ENCODE measurements at regions of chr19 and their contacts with region 1.

Region 1: GRCh38 chr19:57664269-57665127 is 4.2 kb upstream of the ZSCAN4 start:
- DNase-seq: peak; percentile 46
- H3K4me3 ChIP-seq: peak overlapping the region; percentile 44 to 48 (median 46)
- H3K27ac ChIP-seq: no peak overlapping the region
- H3K4me1 ChIP-seq: peaks cover 4% of the 10 kb centered on the region
- H3K27me3 ChIP-seq: peaks cover 0 to 2% of the 10 kb centered on the region in 2 experiments
- CTCF ChIP-seq: no peak
- POLR2A ChIP-seq: no peak

Region 2: GRCh38 chr19:57682226-57682766 is 17.8 kb after region 1 on chr19:
- CTCF ChIA-PET with region 1: interaction called, 16 read pairs
- POLR2A ChIA-PET with region 1: no interaction called
- dilution Hi-C with region 1: no loop called
- intact Hi-C with region 1: no loop called
- DNase-seq: no peak
- H3K4me3 ChIP-seq: peak overlapping the region; percentile 57 to 87 (median 77)
- H3K27ac ChIP-seq: peak overlapping the region; percentile 7
- H3K4me1 ChIP-seq: peaks cover 8% of the 10 kb centered on the region
- H3K27me3 ChIP-seq: no peaks in the 10 kb centered on the region
- CTCF ChIP-seq: no peak
- POLR2A ChIP-seq: no peak

Measured in endothelial cell of umbilical vein (primary cell).